ENCODE measurements at regions of chr9 and their contacts with region 1.

Region 1: DNA sequence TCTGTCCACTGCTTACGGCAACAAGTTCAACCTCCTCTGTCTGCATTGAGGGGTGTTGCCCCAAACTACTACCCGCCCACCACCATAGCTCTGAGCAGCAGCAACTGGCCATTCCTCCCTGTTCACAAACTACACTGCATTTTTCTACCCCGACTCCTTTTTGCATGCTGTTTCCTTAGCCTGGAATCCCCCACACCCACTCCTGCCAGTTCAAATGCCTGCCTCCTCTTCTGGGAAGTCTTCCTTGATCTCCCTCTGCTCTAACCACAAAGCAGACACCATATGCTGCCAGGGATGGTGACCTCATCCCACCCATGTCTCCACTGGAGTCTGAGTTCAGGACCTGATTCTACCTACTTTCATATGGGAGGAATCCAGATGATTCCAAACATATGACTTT is 13.3 kb downstream of the ALDH1B1 start:
- DNase-seq: no peak
- H3K4me3 ChIP-seq: no peak overlapping the region
- H3K4me3 Mint-ChIP-seq: no peak overlapping the region
- H3K27ac Mint-ChIP-seq: no peak overlapping the region
- H3K4me1 ChIP-seq: no peaks in the 10 kb centered on the region
- H3K4me1 Mint-ChIP-seq: no peaks in the 10 kb centered on the region
- H3K27me3 ChIP-seq: no peaks in the 10 kb centered on the region; the same call in 1 of the 2 replicates
- H3K27me3 Mint-ChIP-seq: peaks cover 11% of the 10 kb centered on the region
- CTCF ChIP-seq: no peak

Region 2: GRCh38 chr9:38088006-38088925 is 317.5 kb before region 1 on chr9:
- CTCF ChIA-PET with region 1: no interaction called
- POLR2A ChIA-PET with region 1: no interaction called
- intact Hi-C with region 1: loop called (anchors 5 kb)
- DNase-seq: peak; percentile 74 to 86
- H3K4me3 ChIP-seq: no peak overlapping the region
- H3K4me3 Mint-ChIP-seq: no peak overlapping the region
- H3K27ac Mint-ChIP-seq: no peak overlapping the region
- H3K4me1 ChIP-seq: no peaks in the 10 kb centered on the region
- H3K4me1 Mint-ChIP-seq: peaks cover 5% of the 10 kb centered on the region
- H3K27me3 ChIP-seq: no peaks in the 10 kb centered on the region
- H3K27me3 Mint-ChIP-seq: no peaks in the 10 kb centered on the region
- CTCF ChIP-seq: peak; percentile 92 to 93

Region 3: DNA sequence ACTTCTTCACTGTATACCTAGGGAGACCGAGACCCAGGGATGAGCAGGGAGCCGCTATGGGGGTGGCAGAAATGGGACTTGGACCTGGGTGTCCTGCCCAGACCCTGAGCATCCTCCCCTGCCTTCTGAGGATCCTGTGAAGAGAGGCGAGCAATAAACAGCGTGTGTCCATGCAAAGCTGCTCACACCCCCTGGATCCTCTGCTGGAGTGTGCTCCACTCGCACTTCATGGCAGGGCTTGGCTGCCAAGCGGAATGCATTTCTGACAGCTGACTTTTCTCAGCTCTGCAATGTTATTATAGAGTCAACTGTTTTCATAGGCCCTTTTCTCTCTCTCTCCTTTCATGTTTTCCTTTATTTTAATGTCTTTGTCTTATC is 44.3 kb before region 1 on chr9:
- CTCF ChIA-PET with region 1: no interaction called
- POLR2A ChIA-PET with region 1: no interaction called
- intact Hi-C with region 1: no loop called
- DNase-seq: peak in 1 of 2 experiments; percentile 9
- H3K4me3 ChIP-seq: no peak overlapping the region
- H3K4me3 Mint-ChIP-seq: no peak overlapping the region
- H3K27ac Mint-ChIP-seq: no peak overlapping the region
- H3K4me1 ChIP-seq: no peaks in the 10 kb centered on the region
- H3K4me1 Mint-ChIP-seq: no peaks in the 10 kb centered on the region
- H3K27me3 ChIP-seq: no peaks in the 10 kb centered on the region
- H3K27me3 Mint-ChIP-seq: no peaks in the 10 kb centered on the region
- CTCF ChIP-seq: no peak

Region 4: DNA sequence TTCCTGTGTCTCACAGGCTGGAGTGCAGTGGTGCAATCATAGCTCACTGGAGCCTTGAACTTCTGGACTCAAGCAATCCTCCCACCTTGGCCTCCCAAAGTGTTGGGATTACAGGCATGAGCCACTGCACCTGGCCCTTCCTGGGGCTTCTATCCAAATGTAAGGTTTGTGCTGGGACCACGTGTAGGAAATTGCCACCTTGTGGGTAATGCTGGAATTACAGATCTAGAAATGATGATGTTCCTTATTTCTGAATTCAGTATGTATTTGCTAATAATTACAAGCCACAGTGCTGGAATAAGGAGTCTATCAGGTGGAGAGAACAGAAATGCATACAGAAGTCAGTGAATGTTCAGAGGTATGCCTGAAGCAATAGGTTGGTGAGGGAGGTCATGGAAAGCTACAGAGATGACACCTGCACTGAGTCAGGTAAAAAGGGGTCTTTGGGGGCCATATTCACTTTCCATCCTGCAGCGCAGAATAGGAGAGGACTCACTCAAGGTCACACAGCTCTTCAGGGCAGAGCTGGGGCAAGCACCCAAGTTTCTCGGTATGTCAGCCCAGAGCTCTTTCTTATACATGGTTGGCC is 27.2 kb after region 1 on chr9:
- CTCF ChIA-PET with region 1: no interaction called
- POLR2A ChIA-PET with region 1: no interaction called
- intact Hi-C with region 1: no loop called
- DNase-seq: peak in 1 of 2 experiments; percentile 35
- H3K4me3 ChIP-seq: no peak overlapping the region
- H3K4me3 Mint-ChIP-seq: no peak overlapping the region
- H3K27ac Mint-ChIP-seq: no peak overlapping the region
- H3K4me1 ChIP-seq: peaks cover 29% of the 10 kb centered on the region
- H3K4me1 Mint-ChIP-seq: peaks cover 41% of the 10 kb centered on the region
- H3K27me3 ChIP-seq: no peaks in the 10 kb centered on the region
- H3K27me3 Mint-ChIP-seq: no peaks in the 10 kb centered on the region
- CTCF ChIP-seq: peak; percentile 36 to 72

Measured in Caco-2 (cell line).